ENCODE measurements at regions of chr20 and their contacts with region 1.

Region 1: DNA sequence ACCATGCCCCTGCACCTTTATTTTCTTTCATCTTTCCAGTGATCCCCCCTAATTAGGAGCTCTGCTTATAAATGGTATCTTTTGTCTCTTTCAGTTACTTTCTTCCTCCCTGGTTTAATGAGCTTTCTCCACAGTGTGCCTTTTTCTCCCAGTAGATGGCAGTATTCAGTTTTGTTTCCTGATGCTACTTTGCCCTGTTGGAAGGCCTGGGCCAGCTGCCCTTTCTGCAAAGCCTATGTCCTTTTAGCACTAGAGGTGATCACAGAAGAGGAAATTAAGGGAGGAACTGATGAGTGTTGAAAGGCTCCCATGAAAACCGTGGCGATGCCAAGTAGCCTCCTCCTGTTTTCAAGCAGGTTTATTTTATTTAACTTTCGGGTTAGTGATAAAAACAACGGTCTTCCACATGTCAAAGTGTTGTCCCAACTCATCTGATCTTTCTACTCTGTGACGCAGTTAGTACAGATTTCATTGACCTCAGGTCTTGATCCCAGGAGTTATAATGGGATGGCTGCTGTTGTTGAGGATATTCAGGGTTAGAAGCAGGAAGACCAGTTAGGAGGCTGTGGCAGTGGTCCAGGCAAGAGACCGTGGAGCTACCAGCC is 184.2 kb upstream of the BMP2 start:
- DNase-seq: peak; percentile 78
- H3K4me3 Mint-ChIP-seq: no peak overlapping the region
- H3K27ac Mint-ChIP-seq: no peak overlapping the region
- H3K4me1 Mint-ChIP-seq: peaks cover 23% of the 10 kb centered on the region
- H3K27me3 Mint-ChIP-seq: no peaks in the 10 kb centered on the region
- CTCF ChIP-seq: peak; percentile 66

Region 2: GRCh38 chr20:6265204-6265904 is 317.9 kb before region 1 on chr20:
- CTCF ChIA-PET with region 1: interaction called, 35 read pairs
- POLR2A ChIA-PET with region 1: interaction called, 8 read pairs
- intact Hi-C with region 1: loop called (anchors 1 kb)
- DNase-seq: peak; percentile 76
- H3K4me3 Mint-ChIP-seq: peak overlapping the region; percentile 30
- H3K27ac Mint-ChIP-seq: peak overlapping the region; percentile 82
- H3K4me1 Mint-ChIP-seq: peaks cover 11% of the 10 kb centered on the region
- H3K27me3 Mint-ChIP-seq: no peaks in the 10 kb centered on the region
- CTCF ChIP-seq: peak; percentile 57

Region 3: GRCh38 chr20:6613280-6613861 is 30.1 kb after region 1 on chr20:
- CTCF ChIA-PET with region 1: interaction called, 23 read pairs
- POLR2A ChIA-PET with region 1: interaction called, 3 read pairs
- intact Hi-C with region 1: no loop called
- DNase-seq: peak; percentile 68
- H3K4me3 Mint-ChIP-seq: no peak overlapping the region
- H3K27ac Mint-ChIP-seq: peak overlapping the region; percentile 61
- H3K4me1 Mint-ChIP-seq: peaks cover 21% of the 10 kb centered on the region
- H3K27me3 Mint-ChIP-seq: no peaks in the 10 kb centered on the region
- CTCF ChIP-seq: no peak

Region 4: DNA sequence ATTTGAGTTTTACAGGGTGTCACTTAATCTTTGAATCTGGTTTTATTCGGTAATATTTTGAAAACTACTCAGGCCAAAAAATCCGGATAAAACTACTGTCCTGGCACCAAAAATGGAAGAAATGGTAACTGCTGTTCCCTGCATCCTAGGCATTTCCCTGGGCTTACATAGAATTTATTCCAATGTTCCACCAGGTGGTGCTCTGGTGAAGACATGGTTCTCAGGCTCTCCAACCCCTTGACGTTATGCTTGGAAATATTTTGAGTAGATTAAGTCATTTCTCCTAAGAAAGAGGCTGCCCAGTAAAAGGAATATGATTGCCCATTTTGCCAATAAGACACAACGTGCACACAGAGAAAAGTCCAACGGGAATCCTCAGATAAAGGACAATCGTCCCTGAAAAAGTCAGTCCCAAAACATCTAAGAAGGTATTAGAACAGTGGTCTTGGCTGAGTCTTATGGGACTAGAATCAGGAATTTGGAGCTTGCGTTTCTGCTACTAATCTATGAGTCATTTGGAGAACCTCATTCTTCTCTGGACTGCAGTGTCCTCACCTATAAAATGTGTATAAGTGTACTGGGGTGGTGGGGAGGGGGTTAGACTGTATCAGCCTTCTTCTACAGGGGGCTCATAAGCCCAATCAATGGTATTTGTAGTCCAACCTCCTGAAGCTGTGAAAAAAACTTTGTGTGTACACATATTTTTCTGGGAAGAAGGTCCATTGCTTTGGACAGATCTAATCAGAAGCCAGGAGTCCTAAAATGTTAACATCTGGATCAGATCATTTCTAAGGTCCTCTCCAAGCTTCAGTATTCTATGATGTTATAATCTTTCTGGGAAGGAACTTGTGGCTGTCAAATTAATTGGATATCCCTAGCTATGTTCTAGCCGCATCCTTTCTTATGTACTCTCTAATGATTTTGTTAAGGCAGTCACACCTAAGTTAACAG is 53.2 kb after region 1 on chr20:
- CTCF ChIA-PET with region 1: interaction called, 17 read pairs
- POLR2A ChIA-PET with region 1: interaction called, 4 read pairs
- intact Hi-C with region 1: loop called (anchors 1 kb)
- DNase-seq: peak; percentile 80
- H3K4me3 Mint-ChIP-seq: no peak overlapping the region
- H3K27ac Mint-ChIP-seq: no peak overlapping the region
- H3K4me1 Mint-ChIP-seq: peaks cover 17% of the 10 kb centered on the region
- H3K27me3 Mint-ChIP-seq: no peaks in the 10 kb centered on the region
- CTCF ChIP-seq: peak; percentile 55

Region 5: DNA sequence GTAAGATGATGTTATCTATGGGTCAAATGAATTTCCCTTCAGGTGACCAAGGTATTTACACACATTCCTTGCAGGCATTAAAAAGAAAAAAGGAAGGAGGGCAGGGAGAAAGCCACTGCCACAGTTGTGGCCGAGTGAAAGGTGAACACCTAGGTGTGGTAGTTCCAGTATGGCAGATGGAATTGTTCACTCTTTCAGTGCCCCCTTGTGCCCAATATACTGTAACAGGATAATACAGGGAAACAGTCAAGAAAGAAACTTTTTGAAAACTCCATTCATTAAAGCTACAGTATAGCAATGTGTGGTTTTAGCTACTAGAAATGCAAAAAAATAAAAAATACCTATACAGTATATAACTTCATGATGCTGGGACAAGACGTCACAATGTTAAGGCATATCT is 236.4 kb after region 1 on chr20:
- CTCF ChIA-PET with region 1: interaction called, 29 read pairs
- POLR2A ChIA-PET with region 1: interaction called, 3 read pairs
- intact Hi-C with region 1: loop called (anchors 1 kb)
- DNase-seq: peak; percentile 42
- H3K4me3 Mint-ChIP-seq: no peak overlapping the region
- H3K27ac Mint-ChIP-seq: no peak overlapping the region
- H3K4me1 Mint-ChIP-seq: peaks cover 4% of the 10 kb centered on the region
- H3K27me3 Mint-ChIP-seq: no peaks in the 10 kb centered on the region
- CTCF ChIP-seq: peak; percentile 34

Region 6: GRCh38 chr20:7231303-7231702 is 648.1 kb after region 1 on chr20:
- CTCF ChIA-PET with region 1: no interaction called
- POLR2A ChIA-PET with region 1: no interaction called
- intact Hi-C with region 1: no loop called
- DNase-seq: no peak
- H3K4me3 Mint-ChIP-seq: no peak overlapping the region
- H3K27ac Mint-ChIP-seq: no peak overlapping the region
- H3K4me1 Mint-ChIP-seq: no peaks in the 10 kb centered on the region
- H3K27me3 Mint-ChIP-seq: no peaks in the 10 kb centered on the region
- CTCF ChIP-seq: no peak